IMR-90 (cell line): ENCODE measurements at regions of chr20 and their contacts with region 1.

Region 1: DNA sequence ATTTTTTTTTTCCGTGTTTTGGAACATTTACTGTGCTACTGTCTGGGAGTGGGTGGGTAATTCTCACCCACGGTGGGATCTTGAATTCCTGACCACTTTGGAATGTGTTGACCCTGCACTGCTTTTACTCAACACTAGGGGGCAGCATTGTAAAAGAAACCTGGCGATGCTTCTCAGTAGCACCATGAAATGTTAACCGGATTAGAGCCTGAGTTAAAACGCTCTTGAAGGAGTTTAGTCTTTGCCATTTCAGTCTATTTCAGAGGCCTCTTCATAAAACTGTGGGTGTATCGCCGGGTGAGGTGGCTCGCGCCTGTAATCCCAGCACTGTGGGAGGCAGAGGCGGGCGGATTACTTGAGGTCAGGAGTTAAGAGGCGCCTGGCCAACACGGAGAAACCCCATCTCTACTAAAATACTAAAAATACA is 114.4 kb upstream of the PRND start:
- DNase-seq: peak; percentile 70
- ATAC-seq: peak; percentile 67
- H3K4me3 ChIP-seq: no peak overlapping the region
- H3K27ac ChIP-seq: no peak overlapping the region
- H3K4me1 ChIP-seq: peaks cover 13% of the 10 kb centered on the region
- H3K27me3 ChIP-seq: peaks cover 7% of the 10 kb centered on the region
- CTCF ChIP-seq: peak; percentile 98
- POLR2A ChIP-seq: 0 out of 2 replicates have a peak, but pooled peaks have one; percentile 32
- RAD21 ChIP-seq: peak; percentile 98

Region 2: DNA sequence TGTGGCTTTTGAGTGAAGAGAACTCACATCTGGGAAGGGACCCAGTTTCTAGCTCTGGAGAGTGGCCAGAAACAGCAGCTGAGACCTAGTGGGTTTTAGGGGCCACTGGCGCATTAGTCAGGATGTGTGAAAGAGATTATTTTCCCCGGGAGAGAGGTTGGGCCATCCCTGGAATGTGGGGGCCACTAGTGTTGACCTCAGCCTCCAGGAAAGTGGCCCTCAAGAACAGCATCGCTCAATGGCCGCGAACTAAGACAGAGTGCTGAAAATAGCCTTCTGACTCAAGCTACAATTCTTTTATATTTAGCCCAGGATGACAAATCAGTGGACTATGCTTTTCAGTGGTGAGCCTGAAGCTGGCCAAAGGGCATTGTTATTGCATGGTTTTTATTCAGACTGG is 381.6 kb before region 1 on chr20:
- CTCF ChIA-PET with region 1: no interaction called
- POLR2A ChIA-PET with region 1: no interaction called
- dilution Hi-C with region 1: no loop called
- in situ Hi-C with region 1: no loop called
- intact Hi-C with region 1: no loop called
- DNase-seq: peak; percentile 98
- ATAC-seq: peak; percentile 81
- H3K4me3 ChIP-seq: no peak overlapping the region
- H3K27ac ChIP-seq: no peak overlapping the region
- H3K4me1 ChIP-seq: peaks cover 14% of the 10 kb centered on the region
- H3K27me3 ChIP-seq: no peaks in the 10 kb centered on the region
- CTCF ChIP-seq: no peak
- POLR2A ChIP-seq: no peak
- RAD21 ChIP-seq: no peak

Region 3: GRCh38 chr20:4720041-4720976 is 113.0 kb after region 1 on chr20:
- CTCF ChIA-PET with region 1: interaction called, 4 read pairs
- POLR2A ChIA-PET with region 1: no interaction called
- dilution Hi-C with region 1: no loop called
- in situ Hi-C with region 1: loop called (anchors 5 kb)
- intact Hi-C with region 1: loop called (anchors 1 kb)
- DNase-seq: peak; percentile 67
- ATAC-seq: peak; percentile 96
- H3K4me3 ChIP-seq: no peak overlapping the region
- H3K27ac ChIP-seq: no peak overlapping the region
- H3K4me1 ChIP-seq: no peaks in the 10 kb centered on the region
- H3K27me3 ChIP-seq: peaks cover 29% of the 10 kb centered on the region
- CTCF ChIP-seq: peak; percentile 88
- POLR2A ChIP-seq: no peak
- RAD21 ChIP-seq: peak; percentile 94

Region 4: DNA sequence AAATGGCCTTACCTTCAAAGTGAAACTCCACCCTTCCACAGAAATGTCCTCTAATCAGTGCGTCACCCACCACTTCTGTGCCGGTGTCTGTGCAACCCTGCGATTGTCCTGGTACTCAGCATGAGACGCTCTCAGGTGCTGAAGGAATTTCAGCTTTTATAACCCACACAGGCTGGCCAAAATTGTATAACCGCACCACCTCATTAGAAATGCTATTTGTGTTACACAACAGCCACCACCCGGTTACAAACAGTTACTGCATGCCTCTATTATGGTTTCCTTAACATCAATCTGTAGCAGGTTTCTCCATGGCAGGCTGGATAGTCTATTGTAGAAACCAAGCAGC is 342.5 kb after region 1 on chr20:
- CTCF ChIA-PET with region 1: no interaction called
- POLR2A ChIA-PET with region 1: no interaction called
- dilution Hi-C with region 1: no loop called
- in situ Hi-C with region 1: loop called (anchors 25 kb)
- intact Hi-C with region 1: loop called (anchors 5 kb)
- DNase-seq: peak; percentile 63
- ATAC-seq: peak; percentile 51
- H3K4me3 ChIP-seq: no peak overlapping the region
- H3K27ac ChIP-seq: no peak overlapping the region
- H3K4me1 ChIP-seq: peaks cover 24% of the 10 kb centered on the region
- H3K27me3 ChIP-seq: no peaks in the 10 kb centered on the region
- CTCF ChIP-seq: peak; percentile 74
- POLR2A ChIP-seq: no peak
- RAD21 ChIP-seq: peak; percentile 76

Region 5: DNA sequence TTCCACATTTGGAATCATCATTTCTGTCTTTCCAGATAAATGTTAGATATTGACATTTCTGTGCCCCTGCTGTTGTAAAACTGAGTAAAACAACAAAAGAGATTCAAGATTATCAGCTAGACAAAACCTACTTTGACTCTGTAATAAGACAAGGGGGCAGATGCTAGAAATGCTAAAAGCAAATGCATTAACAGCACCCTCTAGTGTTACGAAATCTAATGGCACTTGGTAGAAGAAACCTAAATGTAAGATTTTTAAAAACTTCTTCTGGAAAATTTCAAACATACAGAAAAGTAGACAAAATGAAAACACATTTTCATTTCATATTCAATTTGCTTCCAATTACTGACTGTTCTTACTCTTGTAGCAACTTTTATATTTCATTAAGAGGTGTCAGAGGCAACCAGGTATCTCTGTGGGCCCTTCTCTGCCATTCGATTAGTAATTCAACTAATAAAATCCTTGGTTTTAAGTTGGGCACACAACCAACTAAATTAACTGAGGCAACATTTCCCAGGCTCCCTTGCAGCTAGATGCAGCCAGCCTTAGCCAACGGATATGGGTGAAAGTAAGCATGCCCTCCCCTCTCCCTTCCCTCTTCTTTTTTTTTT is 349.0 kb after region 1 on chr20:
- CTCF ChIA-PET with region 1: no interaction called
- POLR2A ChIA-PET with region 1: no interaction called
- dilution Hi-C with region 1: no loop called
- in situ Hi-C with region 1: loop called (anchors 25 kb)
- intact Hi-C with region 1: loop called (anchors 5 kb)
- DNase-seq: peak; percentile 75
- ATAC-seq: no peak
- H3K4me3 ChIP-seq: no peak overlapping the region
- H3K27ac ChIP-seq: no peak overlapping the region
- H3K4me1 ChIP-seq: peaks cover 15% of the 10 kb centered on the region
- H3K27me3 ChIP-seq: no peaks in the 10 kb centered on the region
- CTCF ChIP-seq: peak; percentile 92
- POLR2A ChIP-seq: no peak
- RAD21 ChIP-seq: peak; percentile 87

Region 6: GRCh38 chr20:5100684-5101347 is 493.5 kb after region 1 on chr20:
- CTCF ChIA-PET with region 1: no interaction called
- POLR2A ChIA-PET with region 1: no interaction called
- dilution Hi-C with region 1: no loop called
- in situ Hi-C with region 1: no loop called
- intact Hi-C with region 1: loop called (anchors 2 kb)
- DNase-seq: peak; percentile 66
- ATAC-seq: peak; percentile 96
- H3K4me3 ChIP-seq: no peak overlapping the region
- H3K27ac ChIP-seq: no peak overlapping the region
- H3K4me1 ChIP-seq: no peaks in the 10 kb centered on the region
- H3K27me3 ChIP-seq: no peaks in the 10 kb centered on the region
- CTCF ChIP-seq: peak; percentile 84
- POLR2A ChIP-seq: no peak
- RAD21 ChIP-seq: peak; percentile 85

Region 7: GRCh38 chr20:5191829-5192569 is 584.7 kb after region 1 on chr20:
- CTCF ChIA-PET with region 1: no interaction called
- POLR2A ChIA-PET with region 1: no interaction called
- dilution Hi-C with region 1: no loop called
- in situ Hi-C with region 1: no loop called
- intact Hi-C with region 1: loop called (anchors 5 kb)
- DNase-seq: peak; percentile 83
- ATAC-seq: peak; percentile 91
- H3K4me3 ChIP-seq: no peak overlapping the region
- H3K27ac ChIP-seq: peak overlapping the region; percentile 15; the same call in 1 of the 2 replicates
- H3K4me1 ChIP-seq: peaks cover 7% of the 10 kb centered on the region
- H3K27me3 ChIP-seq: no peaks in the 10 kb centered on the region
- CTCF ChIP-seq: peak; percentile 91
- POLR2A ChIP-seq: 0 out of 2 replicates have a peak, but pooled peaks have one; percentile 33
- RAD21 ChIP-seq: peak; percentile 94